Activated CD8-positive, alpha-beta T cell treated with anti-CD3 and anti-CD28 coated beads for 36 hours (primary cell): ENCODE measurements at regions of chr12 and their contacts with region 1.

Region 1: DNA sequence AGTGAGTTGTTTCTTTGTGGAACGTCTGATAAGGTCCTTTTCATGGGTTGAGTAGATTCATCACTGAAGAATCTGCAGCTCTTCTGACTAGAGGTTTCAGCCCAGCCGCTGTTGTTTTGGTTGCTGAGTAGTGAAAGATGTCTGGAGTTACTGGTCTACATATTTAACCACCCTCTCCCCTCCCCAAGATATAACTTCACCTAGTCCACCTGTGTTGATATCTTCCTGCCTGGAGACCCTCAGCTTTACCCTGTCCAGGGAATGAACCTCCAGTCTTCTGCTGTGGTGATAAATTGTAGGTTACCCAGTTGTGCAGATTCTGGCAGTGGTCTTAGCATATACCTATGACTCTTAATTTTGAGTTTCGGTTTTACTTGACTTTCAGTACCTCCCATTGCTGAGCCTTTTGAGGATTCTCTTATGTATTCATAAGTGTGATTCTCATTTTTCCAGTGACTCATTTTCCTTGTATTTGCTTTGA is 62.9 kb downstream of the CCDC91 start:
- DNase-seq: peak; percentile 65
- ATAC-seq: peak; percentile 97
- H3K4me3 Mint-ChIP-seq: peak overlapping the region; percentile 64
- H3K27ac Mint-ChIP-seq: peak overlapping the region; percentile 88
- H3K4me1 Mint-ChIP-seq: peaks cover 68% of the 10 kb centered on the region
- H3K27me3 Mint-ChIP-seq: no peaks in the 10 kb centered on the region
- CTCF ChIP-seq: no peak

Region 2: GRCh38 chr12:28223025-28223554 is 30.1 kb before region 1 on chr12:
- CTCF ChIA-PET with region 1: interaction called, 4 read pairs
- POLR2A ChIA-PET with region 1: no interaction called
- intact Hi-C with region 1: loop called (anchors 1 kb)
- DNase-seq: peak; percentile 32
- ATAC-seq: peak; percentile 90
- H3K4me3 Mint-ChIP-seq: peak overlapping the region; percentile 31
- H3K27ac Mint-ChIP-seq: peak overlapping the region; percentile 84
- H3K4me1 Mint-ChIP-seq: peaks cover 45% of the 10 kb centered on the region
- H3K27me3 Mint-ChIP-seq: peaks cover 2% of the 10 kb centered on the region
- CTCF ChIP-seq: no peak